Caco-2 (cell line): ENCODE measurements at regions of chr2 and their contacts with region 1.

Region 1: GRCh38 chr2:225889446-225889850 is 489.9 kb downstream of the NYAP2 start:
- DNase-seq: peak in 1 of 2 experiments; percentile 40
- H3K4me3 ChIP-seq: no peak overlapping the region
- H3K4me3 Mint-ChIP-seq: no peak overlapping the region
- H3K27ac Mint-ChIP-seq: no peak overlapping the region
- H3K4me1 ChIP-seq: no peaks in the 10 kb centered on the region
- H3K4me1 Mint-ChIP-seq: no peaks in the 10 kb centered on the region
- H3K27me3 ChIP-seq: no peaks in the 10 kb centered on the region
- H3K27me3 Mint-ChIP-seq: no peaks in the 10 kb centered on the region
- CTCF ChIP-seq: peak; percentile 48 to 63

Region 2: GRCh38 chr2:225637259-225637658 is 252.2 kb before region 1 on chr2:
- CTCF ChIA-PET with region 1: no interaction called
- POLR2A ChIA-PET with region 1: no interaction called
- intact Hi-C with region 1: no loop called
- DNase-seq: no peak
- H3K4me3 ChIP-seq: no peak overlapping the region
- H3K4me3 Mint-ChIP-seq: no peak overlapping the region
- H3K27ac Mint-ChIP-seq: no peak overlapping the region
- H3K4me1 ChIP-seq: no peaks in the 10 kb centered on the region
- H3K4me1 Mint-ChIP-seq: no peaks in the 10 kb centered on the region
- H3K27me3 ChIP-seq: no peaks in the 10 kb centered on the region
- H3K27me3 Mint-ChIP-seq: no peaks in the 10 kb centered on the region
- CTCF ChIP-seq: no peak

Region 3: GRCh38 chr2:226030788-226031646 is 141.6 kb after region 1 on chr2:
- CTCF ChIA-PET with region 1: no interaction called
- POLR2A ChIA-PET with region 1: no interaction called
- intact Hi-C with region 1: loop called (anchors 5 kb)
- DNase-seq: peak; percentile 59 to 67
- H3K4me3 ChIP-seq: peak overlapping the region; percentile 59
- H3K4me3 Mint-ChIP-seq: peak overlapping the region; percentile 77
- H3K27ac Mint-ChIP-seq: no peak overlapping the region
- H3K4me1 ChIP-seq: no peaks in the 10 kb centered on the region
- H3K4me1 Mint-ChIP-seq: peaks cover 9% of the 10 kb centered on the region
- H3K27me3 ChIP-seq: no peaks in the 10 kb centered on the region
- H3K27me3 Mint-ChIP-seq: no peaks in the 10 kb centered on the region
- CTCF ChIP-seq: no peak

Region 4: GRCh38 chr2:226618875-226619605 is 729.6 kb after region 1 on chr2:
- CTCF ChIA-PET with region 1: no interaction called
- POLR2A ChIA-PET with region 1: no interaction called
- intact Hi-C with region 1: loop called (anchors 10 kb)
- DNase-seq: peak in 1 of 2 experiments; percentile 1
- H3K4me3 ChIP-seq: no peak overlapping the region
- H3K4me3 Mint-ChIP-seq: peak overlapping the region; percentile 48
- H3K27ac Mint-ChIP-seq: no peak overlapping the region
- H3K4me1 ChIP-seq: peaks cover 18% of the 10 kb centered on the region
- H3K4me1 Mint-ChIP-seq: peaks cover 26% of the 10 kb centered on the region
- H3K27me3 ChIP-seq: no peaks in the 10 kb centered on the region
- H3K27me3 Mint-ChIP-seq: no peaks in the 10 kb centered on the region
- CTCF ChIP-seq: no peak